Caco-2 (cell line): ENCODE measurements at regions of chr20 and their contacts with region 1.

Region 1: GRCh38 chr20:44355498-44356352 is at the start of gene HNF4A:
- DNase-seq: peak; percentile 96 to 97
- H3K4me3 ChIP-seq: peak within 1 kb of the TSS; percentile 77
- H3K4me3 Mint-ChIP-seq: peak within 1 kb of the TSS; percentile 93
- H3K27ac Mint-ChIP-seq: peak within 1 kb of the TSS; percentile 98
- H3K4me1 ChIP-seq: peaks cover 48% of the 10 kb centered on the region
- H3K4me1 Mint-ChIP-seq: peaks cover 41% of the 10 kb centered on the region
- H3K27me3 ChIP-seq: no peaks in the 10 kb centered on the region
- H3K27me3 Mint-ChIP-seq: no peaks in the 10 kb centered on the region
- CTCF ChIP-seq: no peak
- total RNA-seq, gene HNF4A: 256 and 292 TPM in 2 replicates

Region 2: DNA sequence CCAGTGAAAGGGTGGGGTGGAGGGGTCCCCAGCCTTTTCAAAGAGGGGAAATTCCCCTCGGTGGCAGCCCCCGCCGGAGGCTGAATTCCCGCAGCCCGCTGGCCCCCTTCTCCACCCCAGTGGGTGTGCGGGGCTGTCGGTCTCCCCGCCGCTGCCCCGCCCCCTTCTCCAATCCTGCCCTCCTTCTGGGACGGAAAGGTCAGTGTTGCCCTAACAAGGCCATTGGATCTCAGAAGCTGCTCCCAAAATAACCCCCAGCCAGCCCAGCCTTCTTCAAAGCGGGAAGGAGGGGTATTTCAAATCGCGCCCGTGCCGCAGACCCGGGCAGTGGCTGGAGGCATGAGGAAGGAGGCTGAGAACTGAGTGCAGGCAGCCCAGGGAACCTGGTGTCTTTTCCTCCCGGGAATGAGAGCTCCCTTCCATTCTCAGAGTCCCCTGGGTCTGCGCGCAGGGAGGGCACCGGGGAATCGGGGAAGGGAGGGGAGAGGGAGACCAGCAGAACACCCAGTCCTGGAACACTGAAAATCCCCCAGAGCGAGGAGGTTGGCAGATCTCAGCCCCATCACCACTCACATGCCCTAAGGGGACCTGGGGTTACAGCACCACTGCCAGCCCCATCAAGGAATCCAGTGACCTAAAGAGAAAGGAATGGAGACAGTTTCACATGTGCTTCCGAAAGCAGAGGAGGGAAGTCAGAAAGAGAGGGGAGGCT is 168.5 kb before region 1 on chr20 and contains the start of gene JPH2:
- CTCF ChIA-PET with region 1: no interaction called
- POLR2A ChIA-PET with region 1: no interaction called
- intact Hi-C with region 1: no loop called
- DNase-seq: peak; percentile 82 to 87
- H3K4me3 ChIP-seq: peak within 1 kb of the TSS; percentile 38
- H3K4me3 Mint-ChIP-seq: peak within 1 kb of the TSS; percentile 74
- H3K27ac Mint-ChIP-seq: peak within 1 kb of the TSS; percentile 13
- H3K4me1 ChIP-seq: peaks cover 45% of the 10 kb centered on the region
- H3K4me1 Mint-ChIP-seq: peaks cover 27% of the 10 kb centered on the region
- H3K27me3 ChIP-seq: no peaks in the 10 kb centered on the region
- H3K27me3 Mint-ChIP-seq: no peaks in the 10 kb centered on the region
- CTCF ChIP-seq: no peak
- total RNA-seq, gene JPH2: 10.5 and 11.1 TPM in 2 replicates

Region 3: GRCh38 chr20:44231713-44232468 is 123.8 kb before region 1 on chr20:
- CTCF ChIA-PET with region 1: no interaction called
- POLR2A ChIA-PET with region 1: no interaction called
- intact Hi-C with region 1: no loop called
- DNase-seq: peak; percentile 48 to 51
- H3K4me3 ChIP-seq: no peak overlapping the region
- H3K4me3 Mint-ChIP-seq: no peak overlapping the region
- H3K27ac Mint-ChIP-seq: no peak overlapping the region
- H3K4me1 ChIP-seq: no peaks in the 10 kb centered on the region
- H3K4me1 Mint-ChIP-seq: peaks cover 12% of the 10 kb centered on the region
- H3K27me3 ChIP-seq: no peaks in the 10 kb centered on the region
- H3K27me3 Mint-ChIP-seq: no peaks in the 10 kb centered on the region
- CTCF ChIP-seq: peak in 1 of 2 experiments; percentile 22

Region 4: DNA sequence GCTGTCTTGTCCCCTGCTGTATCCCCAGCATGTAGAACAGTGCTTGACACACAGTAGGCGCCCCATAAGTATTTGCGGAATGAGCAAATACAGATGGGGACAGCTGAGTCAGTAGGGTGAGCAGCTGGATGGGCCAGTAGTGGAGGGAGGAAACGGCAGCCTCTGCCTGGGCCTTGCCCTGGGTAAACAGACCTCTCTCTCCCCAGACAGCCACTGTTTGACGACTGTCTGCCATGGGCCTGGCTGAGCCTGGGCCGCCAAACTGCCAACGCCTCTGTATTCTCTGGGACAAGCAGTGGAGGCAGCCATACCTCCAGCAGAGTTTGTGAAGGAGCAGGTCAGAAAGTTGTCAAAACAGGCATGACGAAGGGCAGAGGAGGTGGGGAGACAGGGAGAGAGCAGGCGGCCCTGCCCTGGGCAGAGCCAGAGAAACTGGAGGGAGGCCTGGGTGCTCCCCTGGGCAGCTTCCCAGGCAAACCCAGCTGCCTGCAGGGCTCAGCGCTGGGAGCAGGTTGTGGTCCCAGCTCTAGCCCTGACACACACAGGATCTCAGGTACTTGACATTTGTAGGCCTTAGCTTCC is 15.0 kb after region 1 on chr20:
- CTCF ChIA-PET with region 1: interaction called, 6 read pairs
- POLR2A ChIA-PET with region 1: interaction called, 8 read pairs
- intact Hi-C with region 1: loop called (anchors 1 kb)
- DNase-seq: peak; percentile 98 to 99
- H3K4me3 ChIP-seq: no peak overlapping the region
- H3K4me3 Mint-ChIP-seq: peak overlapping the region; percentile 69
- H3K27ac Mint-ChIP-seq: peak overlapping the region; percentile 95
- H3K4me1 ChIP-seq: peaks cover 52% of the 10 kb centered on the region
- H3K4me1 Mint-ChIP-seq: peaks cover 47% of the 10 kb centered on the region
- H3K27me3 ChIP-seq: no peaks in the 10 kb centered on the region
- H3K27me3 Mint-ChIP-seq: no peaks in the 10 kb centered on the region
- CTCF ChIP-seq: peak in 1 of 2 experiments; percentile 13

Region 5: DNA sequence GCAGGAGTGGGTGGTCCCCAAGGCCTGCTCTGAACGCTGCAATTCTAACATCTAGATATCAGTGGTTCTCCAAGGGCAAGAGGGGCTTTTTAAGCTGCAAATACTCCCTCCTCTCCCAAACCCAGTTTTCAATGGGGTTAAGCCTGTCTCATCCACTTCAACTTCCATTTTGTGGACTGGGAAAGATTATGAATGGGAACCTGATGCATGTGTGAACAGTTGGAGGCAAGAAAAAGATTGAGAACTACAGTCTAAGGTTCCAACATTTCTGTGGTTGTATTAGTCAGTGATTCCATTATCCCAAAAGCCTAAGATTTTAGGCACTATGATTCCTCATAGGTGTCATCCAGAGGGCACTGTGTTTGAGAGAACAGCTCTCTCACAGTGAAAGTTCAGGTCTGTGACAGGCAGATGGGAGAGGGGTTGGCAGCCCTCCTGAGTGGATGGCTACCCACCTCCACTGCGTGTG is 53.4 kb after region 1 on chr20:
- CTCF ChIA-PET with region 1: no interaction called
- POLR2A ChIA-PET with region 1: interaction called, 5 read pairs
- intact Hi-C with region 1: loop called (anchors 1 kb)
- DNase-seq: no peak
- H3K4me3 ChIP-seq: no peak overlapping the region
- H3K4me3 Mint-ChIP-seq: no peak overlapping the region
- H3K27ac Mint-ChIP-seq: peak overlapping the region; percentile 86
- H3K4me1 ChIP-seq: peaks cover 97% of the 10 kb centered on the region
- H3K4me1 Mint-ChIP-seq: peaks cover 74% of the 10 kb centered on the region
- H3K27me3 ChIP-seq: no peaks in the 10 kb centered on the region
- H3K27me3 Mint-ChIP-seq: no peaks in the 10 kb centered on the region
- CTCF ChIP-seq: no peak

Region 6: DNA sequence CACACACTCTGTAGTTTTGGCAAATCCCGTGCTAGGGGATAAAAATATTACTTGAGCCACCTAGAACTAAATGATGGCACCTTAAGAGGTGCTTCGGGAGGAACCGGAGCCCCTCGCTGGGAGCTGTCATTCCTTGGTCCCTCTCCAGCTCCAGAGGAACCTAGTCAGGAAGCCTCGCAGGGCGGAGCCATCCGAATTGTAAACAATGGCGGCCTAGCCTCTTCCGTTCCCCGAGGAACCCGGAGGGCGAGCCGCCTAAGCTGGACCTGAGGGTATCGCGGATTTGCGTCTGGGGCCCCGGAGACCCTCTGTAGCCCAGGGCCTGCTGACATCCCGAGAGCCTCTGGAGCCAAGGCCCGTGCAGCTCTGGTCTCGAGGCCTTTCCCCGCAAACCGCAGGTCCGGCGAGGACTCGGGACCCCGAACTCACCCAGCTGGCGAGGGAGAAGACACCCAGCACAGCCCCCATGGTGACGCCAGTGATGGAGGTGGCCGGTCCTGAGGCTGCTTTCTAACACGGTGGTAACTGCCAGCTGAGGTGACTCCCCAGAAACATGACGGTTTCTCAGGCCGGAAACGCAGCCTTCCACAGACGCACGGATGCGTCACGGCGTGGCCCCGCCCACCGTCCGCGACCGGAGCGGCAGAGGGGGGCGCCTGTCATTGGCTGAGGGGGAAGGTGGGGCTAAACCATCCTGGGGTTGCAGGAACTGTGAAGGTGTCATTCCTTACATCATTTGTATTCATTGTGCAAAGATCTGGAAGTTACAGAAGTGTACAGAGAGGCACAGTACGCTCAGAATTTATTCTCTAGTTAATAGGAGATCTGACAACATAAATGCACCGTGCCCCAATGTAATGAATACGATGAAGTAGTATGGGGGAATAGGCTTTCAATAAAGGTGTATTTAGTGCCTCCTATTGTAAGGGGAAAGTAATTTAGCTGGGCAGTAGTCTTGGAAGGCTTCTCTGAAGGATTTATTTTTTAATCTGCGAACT is 166.1 kb after region 1 on chr20 and contains the start of gene SERINC3:
- CTCF ChIA-PET with region 1: no interaction called
- POLR2A ChIA-PET with region 1: interaction called, 3 read pairs
- intact Hi-C with region 1: loop called (anchors 2 kb)
- DNase-seq: peak; percentile 98 to 100
- H3K4me3 ChIP-seq: peak within 1 kb of the TSS; percentile 77
- H3K4me3 Mint-ChIP-seq: peak within 1 kb of the TSS; percentile 68
- H3K27ac Mint-ChIP-seq: peak within 1 kb of the TSS; percentile 72
- H3K4me1 ChIP-seq: peaks cover 68% of the 10 kb centered on the region
- H3K4me1 Mint-ChIP-seq: peaks cover 68% of the 10 kb centered on the region
- H3K27me3 ChIP-seq: no peaks in the 10 kb centered on the region
- H3K27me3 Mint-ChIP-seq: no peaks in the 10 kb centered on the region
- CTCF ChIP-seq: peak in 1 of 2 experiments; percentile 22
- total RNA-seq, gene SERINC3: 179 and 185 TPM in 2 replicates